Right ventricle myocardium inferior (tissue), 1 donor: ENCODE measurements at regions of chr11 and their contacts with region 1.

Region 1: DNA sequence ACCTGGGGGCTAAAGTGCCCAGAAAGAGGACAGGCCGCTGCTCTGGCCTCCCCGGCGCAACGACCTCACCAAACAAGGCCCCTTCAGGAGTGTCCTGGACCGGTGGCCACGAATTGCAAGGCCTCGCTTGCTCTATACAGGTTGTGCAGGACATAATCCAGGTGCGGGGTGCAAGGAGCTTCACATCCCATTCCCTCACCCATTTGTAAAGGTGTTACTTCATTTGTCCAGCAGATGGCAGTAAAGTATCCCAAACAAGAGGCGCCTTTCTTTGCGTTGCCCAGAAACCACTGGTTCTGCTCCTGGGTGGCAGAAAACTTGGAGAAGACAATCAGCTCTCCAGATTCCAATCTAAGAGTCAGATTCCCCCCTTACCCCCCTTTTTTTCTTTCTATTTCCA is 35.9 kb upstream of the PRDM11 start:
- DNase-seq: no peak
- ATAC-seq: peak; percentile 58

Region 2: DNA sequence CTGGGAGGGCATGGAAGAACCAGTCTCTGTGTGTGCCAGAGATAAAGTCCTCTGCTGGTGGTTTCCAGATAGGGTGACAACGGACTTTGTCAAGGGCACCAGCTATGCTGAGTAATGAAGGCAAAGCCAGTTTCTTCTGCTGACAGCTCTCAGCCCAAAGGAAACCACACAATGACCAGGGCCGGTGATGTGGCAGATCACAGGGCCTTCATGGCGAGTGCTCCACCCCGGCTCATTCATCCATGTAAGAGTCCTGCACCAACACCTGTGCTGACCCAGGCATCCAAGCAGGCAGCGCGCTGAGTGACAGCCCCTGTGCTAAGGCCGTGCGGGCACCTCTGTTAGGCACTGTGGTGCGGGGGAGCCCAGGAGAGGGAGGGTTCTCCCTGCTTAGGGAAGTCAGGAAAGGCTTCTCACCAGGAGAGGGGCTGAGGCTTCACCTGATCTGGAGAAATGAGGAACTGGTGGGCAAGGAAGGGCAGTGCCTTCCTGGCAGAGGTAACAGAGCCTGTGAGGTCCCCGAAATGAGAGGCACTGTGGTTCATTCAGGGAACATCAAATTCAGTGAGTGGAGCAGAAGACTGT is 193.7 kb before region 1 on chr11:
- intact Hi-C with region 1: no loop called
- DNase-seq: peak; percentile 66
- ATAC-seq: peak; percentile 64

Region 3: GRCh38 chr11:45062971-45063611 is 47.5 kb before region 1 on chr11:
- intact Hi-C with region 1: no loop called
- DNase-seq: no peak
- ATAC-seq: no peak

Region 4: DNA sequence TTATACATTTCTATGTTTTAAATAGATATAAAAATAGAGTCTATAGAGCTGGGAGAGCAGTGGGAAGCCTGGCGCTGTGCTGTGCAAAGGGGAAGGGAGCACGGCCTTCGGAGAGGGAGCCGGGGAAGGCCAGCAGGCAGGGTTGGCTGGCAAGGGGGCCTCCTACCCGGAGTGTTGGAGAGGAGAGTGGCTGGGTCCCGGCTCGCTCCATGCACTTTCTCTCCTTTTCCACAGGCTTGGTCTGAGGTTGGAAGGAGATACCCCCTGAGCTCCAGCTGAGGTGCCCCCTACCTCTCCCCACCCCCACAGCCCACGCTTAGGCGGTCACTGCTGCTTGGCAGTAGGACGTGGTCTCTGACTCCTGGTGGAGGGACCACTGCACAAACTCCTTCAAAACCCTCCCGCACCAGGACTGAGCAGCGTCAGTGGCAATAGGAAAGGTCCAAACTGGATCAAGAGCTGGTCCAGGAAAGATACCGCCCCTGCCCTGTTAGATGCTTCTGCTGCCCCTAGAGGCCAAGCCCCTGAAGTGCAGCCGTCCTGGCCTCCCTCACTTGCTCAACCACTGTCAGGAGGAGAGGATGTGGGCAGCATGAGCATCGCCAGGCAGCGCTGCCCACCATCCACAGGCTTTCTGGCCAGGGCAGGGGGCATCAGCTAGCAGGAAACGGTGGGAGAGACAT is 122.7 kb after region 1 on chr11:
- intact Hi-C with region 1: loop called (anchors 5 kb)
- DNase-seq: no peak
- ATAC-seq: peak; percentile 66

Region 5: GRCh38 chr11:45289369-45289768 is 178.8 kb after region 1 on chr11:
- intact Hi-C with region 1: loop called (anchors 1 kb)
- DNase-seq: no peak
- ATAC-seq: no peak